ENCODE measurements at regions of chr6 and their contacts with region 1.

Region 1: GRCh38 chr6:90610751-90611542 is 24.1 kb upstream of the MAP3K7 start:
- DNase-seq: peak; percentile 62
- ATAC-seq: peak; percentile 75
- H3K4me3 Mint-ChIP-seq: peak overlapping the region; percentile 69
- H3K27ac Mint-ChIP-seq: peak overlapping the region; percentile 12
- H3K4me1 Mint-ChIP-seq: peaks cover 9% of the 10 kb centered on the region
- H3K27me3 Mint-ChIP-seq: peaks cover 54% of the 10 kb centered on the region

Region 2: GRCh38 chr6:90621581-90621980 is 10.6 kb after region 1 on chr6:
- CTCF ChIA-PET with region 1: interaction called, 13 read pairs
- POLR2A ChIA-PET with region 1: no interaction called
- intact Hi-C with region 1: no loop called
- DNase-seq: no peak
- ATAC-seq: no peak
- H3K4me3 Mint-ChIP-seq: no peak overlapping the region
- H3K27ac Mint-ChIP-seq: no peak overlapping the region
- H3K4me1 Mint-ChIP-seq: no peaks in the 10 kb centered on the region
- H3K27me3 Mint-ChIP-seq: peaks cover 41% of the 10 kb centered on the region

Region 3: DNA sequence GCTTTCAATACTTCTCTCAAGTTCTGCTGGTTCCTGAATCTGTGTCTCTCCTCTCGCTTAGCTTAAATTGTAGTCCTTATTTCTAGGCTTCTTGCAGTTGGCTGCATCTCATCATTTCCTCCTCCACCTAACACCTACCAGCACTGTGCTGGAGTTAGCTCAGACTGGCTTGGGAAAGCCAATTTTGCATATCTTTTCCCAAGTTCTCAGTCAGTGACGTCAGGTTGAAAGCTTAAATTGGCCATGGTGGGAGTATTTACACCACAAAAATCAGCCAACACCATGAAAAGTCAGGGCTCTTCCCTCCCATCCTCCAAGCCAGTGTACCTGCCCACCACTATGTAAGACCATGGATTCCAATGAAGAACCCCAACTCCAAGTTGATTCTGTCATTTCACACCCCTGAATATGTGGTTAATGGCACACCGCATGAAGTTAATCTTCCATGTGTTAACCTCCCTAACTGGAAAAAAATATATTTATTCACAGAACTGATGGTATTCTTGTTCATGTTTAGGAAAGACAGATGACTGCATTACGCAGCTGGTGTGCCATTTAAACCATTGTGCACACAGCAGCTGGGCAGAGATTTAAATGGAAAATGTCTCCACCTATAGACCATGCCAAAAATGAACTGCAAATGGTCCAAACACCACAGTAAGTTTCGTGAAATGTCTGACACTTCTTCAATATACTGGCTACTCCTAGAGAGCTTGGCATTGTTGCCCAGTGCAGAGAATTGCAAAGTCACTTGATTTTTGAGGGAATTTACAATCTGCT is 250.1 kb after region 1 on chr6:
- CTCF ChIA-PET with region 1: no interaction called
- POLR2A ChIA-PET with region 1: no interaction called
- intact Hi-C with region 1: loop called (anchors 2 to 10 kb)
- DNase-seq: no peak
- ATAC-seq: peak; percentile 47
- H3K4me3 Mint-ChIP-seq: no peak overlapping the region
- H3K27ac Mint-ChIP-seq: no peak overlapping the region
- H3K4me1 Mint-ChIP-seq: peaks cover 4% of the 10 kb centered on the region
- H3K27me3 Mint-ChIP-seq: peaks cover 10% of the 10 kb centered on the region

Region 4: DNA sequence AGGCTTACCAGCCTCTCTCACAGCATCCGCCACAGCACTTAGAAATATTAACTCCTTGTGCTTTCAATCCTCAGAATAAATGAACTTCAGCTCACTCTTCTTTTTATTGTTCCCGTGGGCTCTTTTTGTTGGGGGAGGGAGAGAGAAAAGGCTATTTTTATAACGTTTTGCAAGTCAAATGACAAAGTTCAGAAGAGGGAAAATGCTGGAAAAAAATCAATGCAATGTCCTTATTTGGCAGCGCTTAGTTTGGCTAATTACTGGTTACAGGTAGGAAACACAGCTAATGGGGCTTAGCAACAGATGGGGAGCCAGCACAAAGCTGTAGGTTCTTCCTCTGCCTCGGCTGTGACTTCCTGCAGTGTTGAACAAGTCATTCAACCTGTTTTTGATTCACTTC is 1042.9 kb after region 1 on chr6:
- CTCF ChIA-PET with region 1: no interaction called
- POLR2A ChIA-PET with region 1: no interaction called
- intact Hi-C with region 1: no loop called
- DNase-seq: no peak
- ATAC-seq: no peak
- H3K4me3 Mint-ChIP-seq: no peak overlapping the region
- H3K27ac Mint-ChIP-seq: no peak overlapping the region
- H3K4me1 Mint-ChIP-seq: no peaks in the 10 kb centered on the region
- H3K27me3 Mint-ChIP-seq: no peaks in the 10 kb centered on the region